CD14-positive monocyte (primary cell): ENCODE measurements at regions of chr10 and their contacts with region 1.

Region 1: GRCh38 chr10:90787393-90788198 is 70.2 kb downstream of the HTR7 start:
- DNase-seq: peak; percentile 8 to 27 (median 20)
- H3K4me3 ChIP-seq: no peak overlapping the region
- H3K4me3 Mint-ChIP-seq: no peak overlapping the region
- H3K27ac ChIP-seq: no peak overlapping the region
- H3K27ac Mint-ChIP-seq: peak overlapping the region in 2 of 7 donors; percentile 37 to 59
- H3K4me1 ChIP-seq: peaks cover 12 to 20% of the 10 kb centered on the region in 2 donors
- H3K4me1 Mint-ChIP-seq: peaks cover 22% of the 10 kb centered on the region
- H3K27me3 ChIP-seq: no peaks in the 10 kb centered on the region
- H3K27me3 Mint-ChIP-seq: no peaks in the 10 kb centered on the region
- CTCF ChIP-seq: peak; percentile 69

Region 2: GRCh38 chr10:90817128-90817889 is 29.7 kb after region 1 on chr10:
- intact Hi-C with region 1: no loop called
- DNase-seq: peak in 1 of 3 donors; percentile 6
- H3K4me3 ChIP-seq: no peak overlapping the region
- H3K4me3 Mint-ChIP-seq: no peak overlapping the region
- H3K27ac ChIP-seq: no peak overlapping the region
- H3K27ac Mint-ChIP-seq: peak overlapping the region in 1 of 7 donors; percentile 57
- H3K4me1 ChIP-seq: peaks cover 6 to 18% of the 10 kb centered on the region in 2 donors
- H3K4me1 Mint-ChIP-seq: peaks cover 15% of the 10 kb centered on the region
- H3K27me3 ChIP-seq: no peaks in the 10 kb centered on the region
- H3K27me3 Mint-ChIP-seq: peaks cover 0 to 5% (median 1%) of the 10 kb centered on the region in 3 donors
- CTCF ChIP-seq: no peak

Region 3: DNA sequence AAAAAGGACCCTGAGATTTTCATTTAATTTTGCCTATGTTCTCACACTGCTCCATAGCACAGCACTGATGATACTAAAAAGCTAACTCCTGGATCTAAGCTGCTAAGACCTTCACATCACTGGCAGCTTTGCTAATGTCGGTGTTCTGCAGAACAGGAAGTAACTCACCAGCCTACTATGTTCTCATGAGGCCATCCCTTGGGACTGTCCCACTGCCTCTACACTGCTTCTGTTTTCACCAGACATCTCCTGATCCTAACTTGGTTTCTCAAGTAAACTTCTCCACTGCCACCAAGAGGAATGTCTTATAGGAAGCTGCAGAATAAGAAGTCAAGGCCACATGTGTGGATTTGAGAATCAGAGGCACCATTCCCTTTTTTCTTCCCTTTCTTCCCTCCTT is 55.1 kb after region 1 on chr10:
- intact Hi-C with region 1: loop called in 1 of 2 experiments (anchors 5 kb)
- DNase-seq: no peak
- H3K4me3 ChIP-seq: no peak overlapping the region
- H3K4me3 Mint-ChIP-seq: no peak overlapping the region
- H3K27ac ChIP-seq: no peak overlapping the region
- H3K27ac Mint-ChIP-seq: no peak overlapping the region
- H3K4me1 ChIP-seq: peaks cover 4 to 9% of the 10 kb centered on the region in 2 donors
- H3K4me1 Mint-ChIP-seq: peaks cover 4% of the 10 kb centered on the region
- H3K27me3 ChIP-seq: no peaks in the 10 kb centered on the region
- H3K27me3 Mint-ChIP-seq: peaks cover 1 to 6% (median 2%) of the 10 kb centered on the region in 3 donors
- CTCF ChIP-seq: no peak